ENCODE measurements at regions of chr12 and their contacts with region 1.

Region 1: DNA sequence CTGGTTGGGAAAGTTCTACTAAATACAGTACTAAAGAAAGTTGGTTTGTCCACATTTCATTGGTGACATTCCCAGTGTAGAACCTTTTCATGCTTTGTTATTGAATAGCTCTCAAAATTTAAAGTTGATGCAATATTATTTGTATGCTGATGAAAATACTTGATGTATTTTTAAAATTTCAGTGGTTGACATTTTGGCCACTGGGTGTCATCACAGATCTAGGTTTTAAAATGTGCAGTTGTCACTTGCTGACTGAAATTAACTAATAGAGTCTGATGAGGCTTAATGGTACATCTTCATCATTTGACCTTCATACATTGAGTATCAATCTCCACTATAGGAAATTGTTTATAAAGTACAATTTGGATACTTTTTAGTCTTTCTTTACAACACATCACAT is 37.1 kb downstream of the CMAS start:
- DNase-seq: peak; percentile 57 to 78 (median 71)
- H3K4me3 ChIP-seq: no peak overlapping the region
- H3K27ac ChIP-seq: no peak overlapping the region
- H3K4me1 ChIP-seq: no peaks in the 10 kb centered on the region
- H3K27me3 ChIP-seq: no peaks in the 10 kb centered on the region

Region 2: DNA sequence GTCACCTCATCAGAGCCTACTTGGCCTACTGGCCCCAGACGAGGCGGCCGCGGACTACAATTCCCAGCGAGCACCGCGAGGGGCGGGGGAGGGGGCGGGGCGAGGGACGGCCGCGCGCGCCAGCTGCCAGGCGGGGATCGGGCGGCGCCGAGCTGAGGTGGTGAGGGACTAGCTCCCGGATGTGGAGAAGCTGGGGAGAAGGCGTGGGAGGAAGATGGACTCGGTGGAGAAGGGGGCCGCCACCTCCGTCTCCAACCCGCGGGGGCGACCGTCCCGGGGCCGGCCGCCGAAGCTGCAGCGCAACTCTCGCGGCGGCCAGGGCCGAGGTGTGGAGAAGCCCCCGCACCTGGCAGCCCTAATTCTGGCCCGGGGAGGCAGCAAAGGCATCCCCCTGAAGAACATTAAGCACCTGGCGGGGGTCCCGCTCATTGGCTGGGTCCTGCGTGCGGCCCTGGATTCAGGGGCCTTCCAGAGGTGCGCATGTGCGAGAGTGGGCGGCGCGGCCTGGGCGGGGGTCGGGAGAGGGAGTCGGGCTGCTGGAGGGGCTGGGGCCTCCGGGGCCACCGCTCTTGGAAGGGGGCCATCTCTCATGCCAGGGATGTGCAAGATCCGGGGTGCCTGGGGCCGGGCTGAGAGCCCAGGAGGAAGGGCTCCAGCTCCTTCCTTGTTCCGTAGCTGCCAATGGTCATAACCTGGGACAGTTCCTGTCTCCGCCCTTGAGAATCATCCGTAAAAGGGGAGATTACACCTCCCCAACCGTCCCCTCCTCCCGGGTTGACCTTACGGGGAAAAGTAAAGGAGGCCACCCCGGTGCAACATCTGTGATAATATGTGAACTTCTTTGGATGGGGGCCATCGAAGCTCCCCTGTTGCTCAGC is 36.8 kb before region 1 on chr12 and contains the start of gene CMAS:
- CTCF ChIA-PET with region 1: interaction called, 11 read pairs
- POLR2A ChIA-PET with region 1: no interaction called
- DNase-seq: peak; percentile 63 to 79 (median 73)
- H3K4me3 ChIP-seq: peak within 1 kb of the TSS; percentile 84 to 98 (median 88)
- H3K27ac ChIP-seq: peak within 1 kb of the TSS; percentile 55 to 78
- H3K4me1 ChIP-seq: peaks cover 4 to 20% (median 9%) of the 10 kb centered on the region in 4 experiments
- H3K27me3 ChIP-seq: no peaks in the 10 kb centered on the region

Region 3: DNA sequence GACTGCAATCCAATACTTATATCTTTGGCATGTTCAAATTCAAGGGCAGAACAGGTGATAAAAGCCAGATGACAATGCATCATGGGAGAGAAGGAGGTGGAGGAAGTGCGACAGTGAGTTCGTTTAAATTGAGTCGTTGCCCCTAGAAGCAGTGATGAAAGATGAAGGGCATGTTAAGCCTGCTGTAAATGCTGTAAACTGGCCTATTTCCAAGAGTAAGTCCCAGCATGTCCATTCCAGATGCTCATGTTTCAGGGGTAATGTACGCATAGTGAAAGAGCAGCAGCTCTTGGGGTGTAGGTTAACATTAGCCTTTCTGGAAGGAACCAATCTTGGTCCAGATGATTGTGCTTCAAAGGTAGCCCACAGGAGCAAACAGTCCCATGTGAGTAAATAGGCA is 364.1 kb after region 1 on chr12:
- CTCF ChIA-PET with region 1: interaction called, 19 read pairs
- POLR2A ChIA-PET with region 1: no interaction called
- DNase-seq: no peak
- H3K4me3 ChIP-seq: no peak overlapping the region
- H3K27ac ChIP-seq: no peak overlapping the region
- H3K4me1 ChIP-seq: no peaks in the 10 kb centered on the region
- H3K27me3 ChIP-seq: no peaks in the 10 kb centered on the region

Region 4: GRCh38 chr12:22459838-22460490 is 376.8 kb after region 1 on chr12:
- CTCF ChIA-PET with region 1: interaction called, 31 read pairs
- POLR2A ChIA-PET with region 1: no interaction called
- DNase-seq: peak; percentile 39 to 70 (median 64)
- H3K4me3 ChIP-seq: no peak overlapping the region
- H3K27ac ChIP-seq: no peak overlapping the region
- H3K4me1 ChIP-seq: no peaks in the 10 kb centered on the region
- H3K27me3 ChIP-seq: no peaks in the 10 kb centered on the region

Measured in common myeloid progenitor, CD34-positive (primary cell).